Activated naive CD4-positive, alpha-beta T cell treated with anti-CD3 and anti-CD28 coated beads for 36 hours (primary cell): ENCODE measurements at regions of chr17 and their contacts with region 1.

Region 1: GRCh38 chr17:47698749-47699535 is 5.0 kb downstream of the TBKBP1 start:
- DNase-seq: peak; percentile 92
- H3K4me3 Mint-ChIP-seq: peak overlapping the region; percentile 28
- H3K27ac Mint-ChIP-seq: peak overlapping the region; percentile 64
- H3K4me1 Mint-ChIP-seq: peaks cover 79% of the 10 kb centered on the region
- H3K27me3 Mint-ChIP-seq: no peaks in the 10 kb centered on the region

Region 2: DNA sequence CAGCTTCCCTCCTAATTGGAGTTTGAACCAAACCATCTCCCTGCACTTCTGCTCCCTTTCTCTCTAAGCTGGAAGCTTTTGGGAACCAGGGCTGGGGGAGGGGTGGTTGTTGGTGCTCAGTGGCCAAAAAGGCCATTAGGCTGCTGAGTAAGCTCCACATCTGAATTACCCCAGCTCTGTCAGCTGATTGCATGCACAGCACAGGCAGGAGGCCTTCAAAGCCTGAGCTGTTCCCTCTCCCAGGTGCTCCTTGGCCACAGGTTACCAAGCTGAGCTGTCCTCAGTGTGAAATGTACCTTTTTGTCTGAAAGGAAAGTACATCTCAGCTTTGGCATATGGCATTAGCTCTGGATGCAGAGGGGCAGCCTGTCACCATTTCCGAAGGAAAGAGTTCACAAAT is 11.2 kb before region 1 on chr17:
- CTCF ChIA-PET with region 1: interaction called, 14 read pairs
- intact Hi-C with region 1: no loop called
- DNase-seq: no peak
- H3K4me3 Mint-ChIP-seq: no peak overlapping the region
- H3K27ac Mint-ChIP-seq: no peak overlapping the region
- H3K4me1 Mint-ChIP-seq: peaks cover 31% of the 10 kb centered on the region
- H3K27me3 Mint-ChIP-seq: no peaks in the 10 kb centered on the region

Region 3: DNA sequence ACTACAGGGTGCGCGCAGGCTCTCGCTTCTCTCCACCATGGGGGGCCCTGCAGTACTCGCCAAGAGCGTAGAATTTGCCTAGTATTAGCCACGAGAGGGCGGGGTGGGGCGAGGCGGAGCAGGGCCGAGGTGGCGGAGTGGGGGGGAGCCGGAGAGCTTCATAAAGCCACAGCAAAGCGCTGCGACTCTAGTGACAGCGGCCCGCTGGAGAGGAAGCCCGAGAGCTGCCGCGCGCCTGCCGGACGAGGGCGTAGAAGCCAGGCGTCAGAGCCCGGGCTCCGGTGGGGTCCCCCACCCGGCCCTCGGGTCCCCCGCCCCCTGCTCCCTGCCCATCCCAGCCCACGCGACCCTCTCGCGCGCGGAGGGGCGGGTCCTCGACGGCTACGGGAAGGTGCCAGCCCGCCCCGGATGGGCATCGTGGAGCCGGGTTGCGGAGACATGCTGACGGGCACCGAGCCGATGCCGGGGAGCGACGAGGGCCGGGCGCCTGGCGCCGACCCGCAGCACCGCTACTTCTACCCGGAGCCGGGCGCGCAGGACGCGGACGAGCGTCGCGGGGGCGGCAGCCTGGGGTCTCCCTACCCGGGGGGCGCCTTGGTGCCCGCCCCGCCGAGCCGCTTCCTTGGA is 34.2 kb after region 1 on chr17 and contains the start of gene TBX21:
- CTCF ChIA-PET with region 1: interaction called, 158 read pairs
- intact Hi-C with region 1: loop called (anchors 1 kb)
- DNase-seq: peak; percentile 92
- H3K4me3 Mint-ChIP-seq: peak within 1 kb of the TSS; percentile 100
- H3K27ac Mint-ChIP-seq: peak within 1 kb of the TSS; percentile 99
- H3K4me1 Mint-ChIP-seq: peaks cover 70% of the 10 kb centered on the region
- H3K27me3 Mint-ChIP-seq: no peaks in the 10 kb centered on the region
- total RNA-seq, gene TBX21: 50.6 to 52.3 TPM

Region 4: DNA sequence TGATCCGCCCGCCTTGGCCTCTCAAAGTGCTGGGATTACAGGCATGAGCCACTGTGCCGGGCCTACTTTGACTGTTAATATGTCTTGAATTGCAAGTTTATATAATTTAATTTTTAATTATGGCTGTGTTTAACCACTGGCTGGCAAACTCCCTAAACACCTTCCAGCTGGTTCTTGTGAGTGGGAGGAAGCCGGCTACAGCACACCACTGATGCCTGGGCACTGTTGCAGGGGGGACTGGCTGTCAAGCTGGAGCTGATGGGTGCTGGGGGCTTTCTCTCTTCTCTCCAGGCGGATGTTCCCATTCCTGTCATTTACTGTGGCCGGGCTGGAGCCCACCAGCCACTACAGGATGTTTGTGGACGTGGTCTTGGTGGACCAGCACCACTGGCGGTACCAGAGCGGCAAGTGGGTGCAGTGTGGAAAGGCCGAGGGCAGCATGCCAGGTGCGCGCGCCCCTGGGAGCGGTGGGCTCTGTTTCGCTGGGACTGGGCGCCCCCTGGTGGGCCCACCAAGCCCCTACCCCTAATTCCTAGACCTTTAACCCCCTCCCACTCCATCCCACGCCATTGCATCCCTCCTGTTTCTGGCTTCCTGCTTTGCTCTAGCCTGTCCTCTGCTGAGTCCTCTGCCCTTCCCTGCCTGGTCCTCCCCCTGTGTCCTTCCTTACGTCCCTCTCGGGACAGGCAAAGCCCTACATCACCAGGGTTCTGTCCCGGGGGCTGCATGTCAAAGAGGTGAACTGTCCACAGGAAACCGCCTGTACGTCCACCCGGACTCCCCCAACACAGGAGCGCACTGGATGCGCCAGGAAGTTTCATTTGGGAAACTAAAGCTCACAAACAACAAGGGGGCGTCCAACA is 43.6 kb after region 1 on chr17:
- CTCF ChIA-PET with region 1: interaction called, 158 read pairs
- intact Hi-C with region 1: loop called (anchors 1 kb)
- DNase-seq: peak; percentile 53
- H3K4me3 Mint-ChIP-seq: peak overlapping the region; percentile 45
- H3K27ac Mint-ChIP-seq: no peak overlapping the region
- H3K4me1 Mint-ChIP-seq: peaks cover 46% of the 10 kb centered on the region
- H3K27me3 Mint-ChIP-seq: no peaks in the 10 kb centered on the region

Region 5: GRCh38 chr17:47789611-47790561 is 90.9 kb after region 1 on chr17:
- CTCF ChIA-PET with region 1: interaction called, 5 read pairs
- intact Hi-C with region 1: loop called (anchors 2 kb)
- DNase-seq: peak; percentile 67
- H3K4me3 Mint-ChIP-seq: peak overlapping the region; percentile 67
- H3K27ac Mint-ChIP-seq: no peak overlapping the region
- H3K4me1 Mint-ChIP-seq: peaks cover 5% of the 10 kb centered on the region
- H3K27me3 Mint-ChIP-seq: peaks cover 46% of the 10 kb centered on the region